Heart left ventricle (tissue), 16 donors: ENCODE measurements at regions of chr1 and their contacts with region 1.

Region 1: DNA sequence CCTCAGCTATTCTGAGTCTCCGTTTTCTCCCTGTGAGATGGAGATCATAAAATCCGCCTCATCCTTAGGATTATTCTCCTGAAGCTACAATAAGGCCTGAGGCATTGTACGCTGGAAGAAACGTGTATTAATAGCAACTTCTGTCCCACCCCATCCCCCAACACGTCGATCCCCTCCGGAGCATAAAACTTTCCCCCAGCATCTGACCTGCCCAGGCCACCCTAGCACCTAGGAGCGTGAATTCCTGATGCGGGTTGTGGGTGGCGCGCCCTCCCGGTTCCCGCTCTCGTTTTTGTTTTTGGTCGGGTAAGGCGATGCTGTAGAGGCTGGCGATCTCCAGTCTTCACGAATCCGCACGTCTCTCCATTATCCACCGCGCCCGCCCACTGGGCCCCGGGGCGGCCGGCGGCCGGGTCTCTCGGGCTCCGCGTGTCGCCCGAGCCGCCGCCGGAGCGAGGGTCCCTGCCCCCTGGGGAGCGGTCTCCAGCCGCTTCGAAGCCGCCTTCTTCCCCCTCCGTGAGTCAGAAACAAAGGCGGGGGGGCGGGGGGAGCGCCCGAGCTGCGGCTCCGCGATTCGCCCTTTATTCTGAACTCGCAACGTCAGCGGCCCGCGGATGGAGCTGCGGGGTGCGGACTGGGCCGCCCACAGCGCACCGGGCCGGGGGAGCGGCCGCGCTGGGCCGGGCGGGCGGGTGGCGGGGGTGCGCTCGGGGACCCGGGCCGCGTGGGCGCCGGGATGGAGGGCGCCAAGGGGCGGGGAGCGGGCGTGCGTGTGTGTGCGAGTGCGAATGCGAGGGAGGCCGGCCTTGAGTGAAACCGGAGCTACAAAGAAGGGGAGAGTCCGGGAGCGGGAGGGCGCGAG is at the start of gene PLEKHO1:
- DNase-seq: peak; percentile 89 to 94 (median 91)
- ATAC-seq: peak; percentile 28 to 87 (median 80)
- H3K4me3 ChIP-seq: peak within 1 kb of the TSS; percentile 71 to 93 (median 86)
- H3K27ac ChIP-seq: peak within 1 kb of the TSS; percentile 85 to 98 (median 92)
- H3K4me1 ChIP-seq: peaks cover 3 to 53% (median 44%) of the 10 kb centered on the region in 12 donors
- H3K27me3 ChIP-seq: no peaks in the 10 kb centered on the region
- CTCF ChIP-seq: no peak
- POLR2A ChIP-seq: peak; percentile 35 to 81
- total RNA-seq, gene PLEKHO1: 46.8 to 152 (median 67.6) TPM

Region 2: GRCh38 chr1:150089846-150090520 is 59.5 kb before region 1 on chr1:
- intact Hi-C with region 1: loop called in 1 of 10 experiments (anchors 5 kb)
- DNase-seq: no peak
- ATAC-seq: peak in 1 of 4 donors; percentile 41
- H3K4me3 ChIP-seq: no peak overlapping the region
- H3K27ac ChIP-seq: peak overlapping the region in 2 of 12 donors; percentile 15 to 64
- H3K4me1 ChIP-seq: peaks cover 0 to 31% (median 5%) of the 10 kb centered on the region in 12 donors
- H3K27me3 ChIP-seq: no peaks in the 10 kb centered on the region
- CTCF ChIP-seq: no peak
- POLR2A ChIP-seq: no peak

Region 3: GRCh38 chr1:150106341-150106740 is 43.2 kb before region 1 on chr1:
- intact Hi-C with region 1: loop called in 2 of 10 experiments (anchors 5 kb)
- DNase-seq: no peak
- ATAC-seq: no peak
- H3K4me3 ChIP-seq: no peak overlapping the region
- H3K27ac ChIP-seq: peak overlapping the region in 1 of 12 donors; percentile 54
- H3K4me1 ChIP-seq: peaks cover 0 to 22% (median 2%) of the 10 kb centered on the region in 12 donors
- H3K27me3 ChIP-seq: no peaks in the 10 kb centered on the region
- CTCF ChIP-seq: no peak
- POLR2A ChIP-seq: no peak